ENCODE measurements at regions of chr12 and their contacts with region 1.

Region 1: GRCh38 chr12:113196996-113197395 is 11.5 kb downstream of the RITA1 start:
- DNase-seq: peak; percentile 88
- ATAC-seq: peak; percentile 84
- H3K4me3 ChIP-seq: no peak overlapping the region
- H3K27ac ChIP-seq: peak overlapping the region; percentile 25
- H3K4me1 ChIP-seq: peaks cover 14% of the 10 kb centered on the region
- H3K27me3 ChIP-seq: no peaks in the 10 kb centered on the region
- CTCF ChIP-seq: peak; percentile 87

Region 2: DNA sequence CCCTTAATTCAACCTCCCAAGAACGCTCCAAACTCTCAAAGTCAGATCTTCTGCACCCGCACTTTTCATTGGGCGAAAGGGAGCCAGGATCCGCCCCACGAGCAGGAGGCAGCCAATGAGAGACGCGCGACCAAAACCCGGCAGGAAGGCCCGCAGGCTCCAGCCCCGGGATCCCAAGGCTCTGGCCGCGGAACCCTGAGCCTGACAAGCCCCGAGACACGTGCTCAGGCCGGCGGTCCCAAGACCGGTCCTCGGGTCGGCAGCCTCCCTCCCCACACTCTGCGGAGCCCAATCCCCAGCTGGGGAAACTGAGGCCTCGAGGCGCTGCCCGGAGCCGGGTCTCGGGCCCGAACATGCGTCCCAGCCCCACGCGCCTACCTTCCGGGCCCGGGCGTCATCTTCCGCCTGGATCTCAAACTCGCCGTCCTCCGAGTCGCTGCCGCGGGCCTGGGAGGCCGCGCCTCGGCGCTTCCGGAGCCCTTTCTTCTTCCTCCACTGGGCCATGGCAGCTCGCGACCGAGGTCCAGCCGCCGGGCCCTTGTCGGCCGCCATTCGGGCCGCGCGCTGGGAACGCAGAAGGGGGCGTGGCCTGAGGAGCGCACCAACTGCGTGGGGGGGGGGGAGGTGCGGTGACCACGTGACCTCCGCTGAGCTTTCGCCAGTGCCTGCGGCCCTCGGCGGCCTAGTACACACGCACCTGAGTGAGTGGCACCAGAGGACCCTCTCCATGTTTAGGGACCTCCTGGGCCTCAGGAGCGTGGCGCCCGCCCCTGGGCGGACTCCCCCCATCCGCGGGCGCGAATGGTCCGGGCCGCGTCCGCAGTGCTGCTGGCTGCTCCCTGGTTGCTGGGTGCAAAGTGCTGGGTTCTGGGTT is 11.9 kb before region 1 on chr12 and contains the starts of genes DDX54 and RITA1:
- CTCF ChIA-PET with region 1: no interaction called
- POLR2A ChIA-PET with region 1: interaction called, 23 read pairs
- intact Hi-C with region 1: no loop called
- DNase-seq: peak; percentile 89
- ATAC-seq: peak; percentile 87
- H3K4me3 ChIP-seq: peak within 1 kb of the TSS; percentile 95
- H3K27ac ChIP-seq: peak within 1 kb of the TSS; percentile 91
- H3K4me1 ChIP-seq: peaks cover 24% of the 10 kb centered on the region
- H3K27me3 ChIP-seq: no peaks in the 10 kb centered on the region
- CTCF ChIP-seq: no peak
- total RNA-seq, gene DDX54: 158 and 309 TPM in 2 replicates
- total RNA-seq, gene RITA1: 66.8 and 71.6 TPM in 2 replicates

Region 3: DNA sequence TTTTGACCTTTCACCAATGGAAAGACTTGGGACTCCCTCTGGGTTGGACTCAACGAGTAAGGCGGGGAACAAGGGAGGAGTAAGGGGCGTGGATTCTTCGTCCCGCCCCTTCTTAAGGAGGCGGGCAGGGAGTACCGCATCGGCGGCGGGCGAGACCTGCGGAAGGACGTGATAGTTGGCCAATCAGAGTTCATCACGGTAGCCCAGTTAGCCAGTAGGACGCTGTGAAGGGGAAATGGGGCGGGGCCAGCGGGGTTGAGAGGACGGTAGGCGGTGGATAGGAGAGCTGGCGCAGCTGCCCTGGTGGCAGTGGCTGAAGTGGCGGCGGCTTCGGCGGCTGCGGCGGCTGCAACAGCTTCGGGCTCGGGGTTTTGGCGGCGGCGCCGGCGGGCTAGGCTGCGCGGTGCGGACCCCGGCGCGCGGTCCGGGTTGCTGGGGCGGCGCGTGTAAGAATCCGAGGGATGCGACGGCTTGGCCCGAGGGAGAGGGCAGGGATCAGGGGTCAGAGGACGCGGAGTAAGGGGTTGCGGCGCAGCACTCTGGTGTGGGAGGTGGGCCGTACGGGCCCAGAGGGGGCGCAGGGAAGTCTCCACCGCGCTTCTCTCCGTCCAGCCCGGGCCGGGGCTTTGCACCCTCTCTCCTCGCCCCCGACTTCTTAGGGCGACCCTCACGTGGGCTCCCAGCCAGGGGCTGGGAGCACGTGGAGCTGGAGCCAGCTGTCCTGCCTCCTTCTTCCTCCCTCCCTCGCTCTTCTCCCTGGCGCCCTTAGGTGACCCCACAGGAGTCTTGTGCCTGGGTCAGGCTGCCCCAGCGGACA is 24.4 kb after region 1 on chr12 and contains the start of gene TPCN1:
- CTCF ChIA-PET with region 1: interaction called, 17 read pairs
- POLR2A ChIA-PET with region 1: no interaction called
- intact Hi-C with region 1: no loop called
- DNase-seq: peak; percentile 100
- ATAC-seq: peak; percentile 90
- H3K4me3 ChIP-seq: peak within 1 kb of the TSS; percentile 79
- H3K27ac ChIP-seq: peak within 1 kb of the TSS; percentile 82
- H3K4me1 ChIP-seq: peaks cover 27% of the 10 kb centered on the region
- H3K27me3 ChIP-seq: no peaks in the 10 kb centered on the region
- CTCF ChIP-seq: no peak
- total RNA-seq, gene TPCN1: 19.0 and 29.3 TPM in 2 replicates

Region 4: DNA sequence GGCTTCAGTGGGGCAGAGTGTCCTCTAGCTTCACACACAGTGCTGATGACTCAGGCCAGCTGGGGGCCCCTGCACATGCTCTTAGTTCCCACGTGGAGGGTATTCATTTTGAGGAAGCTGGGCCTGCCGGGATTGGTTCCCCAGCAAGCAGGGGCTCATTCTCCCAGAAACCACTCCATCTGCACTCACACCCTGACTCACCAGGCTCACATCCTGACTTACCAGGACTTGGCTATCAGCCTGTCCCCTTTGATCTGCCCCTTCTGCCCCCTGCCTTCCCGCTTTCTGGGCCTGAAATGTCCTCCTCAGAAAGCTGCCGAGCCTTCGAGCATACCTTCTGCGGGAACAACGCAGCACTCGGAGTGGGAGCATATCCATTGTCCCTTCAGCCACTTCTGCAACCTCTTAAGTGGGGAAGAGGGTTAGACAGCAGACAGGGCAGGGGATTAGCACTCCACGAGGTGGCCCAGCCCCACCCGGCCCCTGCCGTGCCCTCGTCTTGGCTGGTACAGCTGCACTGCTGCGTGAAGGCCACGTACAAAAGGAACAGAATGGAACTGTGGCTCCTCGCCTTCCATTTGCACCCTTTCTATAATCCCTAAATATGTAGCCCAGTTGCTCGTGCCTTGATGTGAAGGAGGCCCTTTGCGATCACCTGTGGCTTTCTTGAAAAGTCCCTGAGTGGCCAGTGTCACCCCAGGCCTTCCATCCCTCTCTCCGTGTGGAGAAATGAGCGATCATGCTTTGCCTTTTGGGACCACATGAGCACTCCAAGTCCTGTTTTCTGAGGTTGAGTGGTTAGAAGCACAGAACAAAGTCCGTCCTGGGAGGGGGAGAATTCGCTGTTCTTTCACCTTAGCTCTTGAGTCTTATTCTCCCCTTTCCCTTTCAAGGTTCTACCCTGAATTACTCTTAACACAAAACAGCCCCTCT is 50.4 kb after region 1 on chr12:
- CTCF ChIA-PET with region 1: interaction called, 8 read pairs
- POLR2A ChIA-PET with region 1: interaction called, 3 read pairs
- intact Hi-C with region 1: loop called (anchors 1 kb)
- DNase-seq: peak; percentile 48
- ATAC-seq: no peak
- H3K4me3 ChIP-seq: peak overlapping the region; percentile 49
- H3K27ac ChIP-seq: peak overlapping the region; percentile 99
- H3K4me1 ChIP-seq: peaks cover 47% of the 10 kb centered on the region
- H3K27me3 ChIP-seq: no peaks in the 10 kb centered on the region
- CTCF ChIP-seq: no peak

Region 5: DNA sequence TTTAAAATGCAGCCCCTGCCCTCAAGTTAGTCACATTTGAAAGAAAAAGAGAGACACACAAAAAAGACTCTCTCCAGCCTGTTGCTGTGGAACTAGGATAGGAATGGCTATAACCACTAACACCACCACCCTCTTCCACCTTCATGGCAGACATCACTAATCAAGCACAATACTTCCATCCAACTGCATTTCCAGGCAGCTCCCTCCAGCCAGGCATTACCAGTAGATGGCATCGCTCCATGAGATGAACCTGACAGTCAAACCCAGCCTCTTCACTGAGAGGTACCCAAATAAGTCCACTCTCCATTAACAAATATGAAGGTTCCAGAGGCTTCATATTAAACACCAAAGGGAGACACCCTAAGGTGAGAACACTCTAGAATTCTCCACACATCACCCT is 113.5 kb after region 1 on chr12:
- CTCF ChIA-PET with region 1: no interaction called
- POLR2A ChIA-PET with region 1: no interaction called
- intact Hi-C with region 1: loop called (anchors 5 kb)
- DNase-seq: peak; percentile 51
- ATAC-seq: no peak
- H3K4me3 ChIP-seq: no peak overlapping the region
- H3K27ac ChIP-seq: no peak overlapping the region
- H3K4me1 ChIP-seq: peaks cover 25% of the 10 kb centered on the region
- H3K27me3 ChIP-seq: no peaks in the 10 kb centered on the region
- CTCF ChIP-seq: peak; percentile 54

Region 6: DNA sequence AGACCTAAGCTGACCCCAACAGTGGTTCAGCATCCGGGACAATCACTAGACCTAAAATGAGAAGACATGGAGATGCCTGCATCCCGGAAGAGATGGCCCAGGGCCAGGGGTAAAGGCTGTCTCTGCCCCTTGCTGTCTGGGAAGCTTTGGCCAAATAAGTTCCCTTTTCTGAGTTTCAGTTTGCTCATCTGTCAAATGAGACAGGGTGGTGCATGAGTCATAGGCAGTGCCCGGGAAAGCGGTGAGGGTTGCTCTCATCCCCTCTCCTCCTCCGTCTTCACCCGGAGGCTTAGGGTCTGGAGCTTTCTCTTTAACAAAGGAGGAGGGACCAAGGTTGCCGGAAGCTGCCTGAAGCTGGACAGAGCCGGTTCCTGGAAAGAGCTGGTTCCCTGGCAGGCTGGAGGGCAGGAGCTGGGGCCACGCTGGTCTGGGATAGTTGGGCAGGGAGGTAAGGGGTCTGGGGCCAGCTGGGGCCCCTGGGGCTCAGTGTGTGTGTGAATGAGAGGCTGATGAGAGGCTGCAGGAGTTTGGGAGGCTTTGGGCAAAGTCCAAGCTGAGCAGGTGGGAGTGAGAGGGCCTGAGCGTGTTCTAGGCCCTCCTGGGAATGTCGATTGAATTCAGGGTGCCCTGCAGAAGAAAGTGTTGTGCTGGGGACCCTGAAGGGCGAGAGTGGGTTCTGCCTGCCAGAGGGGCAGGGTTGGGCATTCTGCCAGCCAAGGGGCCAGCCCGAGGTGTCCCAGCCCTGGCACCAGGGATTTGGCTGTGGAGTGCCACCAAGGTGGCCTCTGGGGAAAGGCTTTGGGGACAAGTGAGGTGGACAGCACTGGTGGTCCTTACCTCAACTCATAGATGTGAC is 225.3 kb after region 1 on chr12 and contains the start of gene SDSL:
- CTCF ChIA-PET with region 1: interaction called, 12 read pairs
- POLR2A ChIA-PET with region 1: no interaction called
- intact Hi-C with region 1: loop called (anchors 5 kb)
- DNase-seq: peak; percentile 96
- ATAC-seq: peak; percentile 99
- H3K4me3 ChIP-seq: peak within 1 kb of the TSS; percentile 80
- H3K27ac ChIP-seq: peak within 1 kb of the TSS; percentile 78
- H3K4me1 ChIP-seq: peaks cover 22% of the 10 kb centered on the region
- H3K27me3 ChIP-seq: no peaks in the 10 kb centered on the region
- CTCF ChIP-seq: no peak
- total RNA-seq, gene SDSL: 14.0 and 19.9 TPM in 2 replicates